ENCODE measurements at regions of chr9 and their contacts with region 1.

Region 1: GRCh38 chr9:9790216-9790872 is 822.5 kb downstream of the PTPRD start:
- DNase-seq: no peak
- H3K4me3 ChIP-seq: no peak overlapping the region
- H3K27ac ChIP-seq: no peak overlapping the region
- H3K4me1 ChIP-seq: no peaks in the 10 kb centered on the region
- H3K27me3 ChIP-seq: no peaks in the 10 kb centered on the region
- CTCF ChIP-seq: peak in 9 of 11 experiments; percentile 7 to 52 (median 46)
- POLR2A ChIP-seq: no peak

Region 2: GRCh38 chr9:9592104-9592503 is 198.2 kb before region 1 on chr9:
- intact Hi-C with region 1: no loop called
- DNase-seq: no peak
- H3K4me3 ChIP-seq: no peak overlapping the region
- H3K27ac ChIP-seq: no peak overlapping the region
- H3K4me1 ChIP-seq: no peaks in the 10 kb centered on the region
- H3K27me3 ChIP-seq: no peaks in the 10 kb centered on the region
- CTCF ChIP-seq: no peak
- POLR2A ChIP-seq: no peak

Region 3: GRCh38 chr9:9605681-9606080 is 184.7 kb before region 1 on chr9:
- intact Hi-C with region 1: loop called (anchors 5 kb)
- DNase-seq: no peak
- H3K4me3 ChIP-seq: no peak overlapping the region
- H3K27ac ChIP-seq: no peak overlapping the region
- H3K4me1 ChIP-seq: no peaks in the 10 kb centered on the region
- H3K27me3 ChIP-seq: no peaks in the 10 kb centered on the region
- CTCF ChIP-seq: no peak
- POLR2A ChIP-seq: no peak

Region 4: GRCh38 chr9:9942764-9943424 is 152.6 kb after region 1 on chr9:
- intact Hi-C with region 1: no loop called
- DNase-seq: peak; percentile 74
- H3K4me3 ChIP-seq: no peak overlapping the region
- H3K27ac ChIP-seq: no peak overlapping the region
- H3K4me1 ChIP-seq: no peaks in the 10 kb centered on the region
- H3K27me3 ChIP-seq: no peaks in the 10 kb centered on the region
- CTCF ChIP-seq: peak; percentile 39 to 90 (median 84)
- POLR2A ChIP-seq: no peak